Activated naive CD4-positive, alpha-beta T cell treated with anti-CD3 and anti-CD28 coated beads, Interleukin-2, amount 10 ng/mL, durations not matched to agents 7 days and 5 days (primary cell): ENCODE measurements at regions of chr4 and their contacts with region 1.

Region 1: GRCh38 chr4:67087897-67088296 is 457.4 kb downstream of the CENPC start:
- DNase-seq: peak; percentile 56
- H3K4me3 Mint-ChIP-seq: no peak overlapping the region
- H3K27ac Mint-ChIP-seq: no peak overlapping the region
- H3K4me1 Mint-ChIP-seq: no peaks in the 10 kb centered on the region
- H3K27me3 Mint-ChIP-seq: no peaks in the 10 kb centered on the region

Region 2: DNA sequence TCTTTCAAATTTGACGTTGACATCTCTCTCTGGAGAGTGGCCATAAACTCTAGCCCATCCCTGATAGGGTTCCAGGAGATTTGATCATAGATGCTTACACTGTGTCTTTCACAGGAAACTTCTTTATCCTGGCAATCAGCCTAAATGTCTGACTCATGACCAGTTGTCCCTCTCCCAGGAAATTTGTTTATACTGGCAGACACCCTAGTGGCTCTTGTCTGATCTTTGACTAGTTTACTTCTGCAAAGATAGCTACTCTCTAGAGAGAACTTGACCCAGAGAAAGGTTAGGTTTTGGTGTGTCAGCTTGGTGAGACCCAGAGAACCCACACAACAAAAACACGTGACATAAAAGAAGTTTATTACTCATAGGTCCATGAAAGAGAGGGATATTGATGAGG is 52.4 kb before region 1 on chr4:
- CTCF ChIA-PET with region 1: no interaction called
- DNase-seq: no peak
- H3K4me3 Mint-ChIP-seq: no peak overlapping the region
- H3K27ac Mint-ChIP-seq: no peak overlapping the region
- H3K4me1 Mint-ChIP-seq: no peaks in the 10 kb centered on the region
- H3K27me3 Mint-ChIP-seq: no peaks in the 10 kb centered on the region

Region 3: GRCh38 chr4:67198727-67199126 is 110.8 kb after region 1 on chr4:
- CTCF ChIA-PET with region 1: no interaction called
- DNase-seq: no peak
- H3K4me3 Mint-ChIP-seq: no peak overlapping the region
- H3K27ac Mint-ChIP-seq: no peak overlapping the region
- H3K4me1 Mint-ChIP-seq: no peaks in the 10 kb centered on the region
- H3K27me3 Mint-ChIP-seq: no peaks in the 10 kb centered on the region

Region 4: GRCh38 chr4:67327262-67328017 is 239.5 kb after region 1 on chr4:
- CTCF ChIA-PET with region 1: interaction called, 24 read pairs
- DNase-seq: peak; percentile 62
- H3K4me3 Mint-ChIP-seq: no peak overlapping the region
- H3K27ac Mint-ChIP-seq: no peak overlapping the region
- H3K4me1 Mint-ChIP-seq: no peaks in the 10 kb centered on the region
- H3K27me3 Mint-ChIP-seq: no peaks in the 10 kb centered on the region